A549 (cell line): ENCODE measurements at regions of chr18 and their contacts with region 1.

Region 1: DNA sequence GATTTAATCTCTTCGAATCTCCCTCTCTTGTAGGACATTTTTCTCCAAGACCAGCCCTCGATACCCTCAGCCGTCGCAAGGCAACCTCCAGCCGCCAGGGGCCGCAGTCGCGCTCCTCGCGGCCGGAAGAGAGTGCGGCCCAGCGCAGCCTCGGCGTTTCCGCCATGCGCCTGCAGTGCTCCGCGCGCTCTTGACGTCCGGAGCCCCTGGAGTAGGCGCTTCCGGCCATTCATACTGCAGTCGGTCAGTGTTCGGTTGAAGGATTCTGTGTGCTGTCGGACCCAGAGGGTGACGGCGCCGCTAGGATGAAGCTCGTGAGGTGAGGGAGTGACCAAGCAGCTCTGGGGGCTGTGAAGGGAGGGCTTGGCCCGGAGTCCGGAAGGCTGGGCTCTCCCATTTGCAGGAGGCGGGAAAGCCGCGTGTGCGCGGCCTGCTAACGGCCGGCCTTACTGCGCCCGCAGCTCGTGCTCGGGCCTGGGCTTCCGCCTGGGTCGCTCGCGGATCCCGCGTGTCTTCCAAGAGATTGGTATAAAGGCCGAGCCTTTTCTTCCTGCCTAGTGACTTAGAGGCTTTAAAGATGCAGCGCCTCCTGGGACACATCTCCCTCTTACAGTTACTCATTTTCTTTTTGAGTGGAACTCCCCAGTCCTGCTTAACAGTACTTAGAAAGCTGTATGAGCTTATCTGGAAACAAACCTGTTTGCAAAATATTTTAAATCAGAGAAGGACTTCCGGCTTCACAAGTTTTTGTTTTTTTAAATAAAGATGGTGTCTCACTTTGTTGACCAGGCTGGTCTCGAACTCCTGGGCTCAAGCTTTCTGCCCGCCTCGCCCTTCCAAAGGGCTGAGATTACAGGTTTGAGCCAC is at the start of gene SNRPD1:
- DNase-seq: peak; percentile 78 to 92
- ATAC-seq: peak; percentile 99 to 100
- H3K4me3 ChIP-seq: peak within 1 kb of the TSS; percentile 95
- H3K27ac ChIP-seq: peak within 1 kb of the TSS; percentile 93 to 94
- H3K4me1 ChIP-seq: peaks cover 18% of the 10 kb centered on the region; the same call in 2 of the 3 replicates
- CTCF ChIP-seq: peak; percentile 65
- EP300 ChIP-seq: no peak
- POLR2A ChIP-seq: peak; percentile 68
- RAD21 ChIP-seq: no peak; a peak in 1 of 5 replicates
- polyA plus RNA-seq, gene SNRPD1: 49.3 and 139 TPM in 2 replicates

Region 2: GRCh38 chr18:21074336-21075323 is 537.7 kb before region 1 on chr18:
- CTCF ChIA-PET with region 1: no interaction called
- POLR2A ChIA-PET with region 1: no interaction called
- DNase-seq: no peak
- ATAC-seq: no peak
- H3K4me3 ChIP-seq: no peak overlapping the region
- H3K27ac ChIP-seq: no peak overlapping the region
- H3K4me1 ChIP-seq: peaks cover 21% of the 10 kb centered on the region; the same call in 2 of the 3 replicates
- CTCF ChIP-seq: no peak
- EP300 ChIP-seq: no peak
- POLR2A ChIP-seq: no peak
- RAD21 ChIP-seq: no peak

Region 3: DNA sequence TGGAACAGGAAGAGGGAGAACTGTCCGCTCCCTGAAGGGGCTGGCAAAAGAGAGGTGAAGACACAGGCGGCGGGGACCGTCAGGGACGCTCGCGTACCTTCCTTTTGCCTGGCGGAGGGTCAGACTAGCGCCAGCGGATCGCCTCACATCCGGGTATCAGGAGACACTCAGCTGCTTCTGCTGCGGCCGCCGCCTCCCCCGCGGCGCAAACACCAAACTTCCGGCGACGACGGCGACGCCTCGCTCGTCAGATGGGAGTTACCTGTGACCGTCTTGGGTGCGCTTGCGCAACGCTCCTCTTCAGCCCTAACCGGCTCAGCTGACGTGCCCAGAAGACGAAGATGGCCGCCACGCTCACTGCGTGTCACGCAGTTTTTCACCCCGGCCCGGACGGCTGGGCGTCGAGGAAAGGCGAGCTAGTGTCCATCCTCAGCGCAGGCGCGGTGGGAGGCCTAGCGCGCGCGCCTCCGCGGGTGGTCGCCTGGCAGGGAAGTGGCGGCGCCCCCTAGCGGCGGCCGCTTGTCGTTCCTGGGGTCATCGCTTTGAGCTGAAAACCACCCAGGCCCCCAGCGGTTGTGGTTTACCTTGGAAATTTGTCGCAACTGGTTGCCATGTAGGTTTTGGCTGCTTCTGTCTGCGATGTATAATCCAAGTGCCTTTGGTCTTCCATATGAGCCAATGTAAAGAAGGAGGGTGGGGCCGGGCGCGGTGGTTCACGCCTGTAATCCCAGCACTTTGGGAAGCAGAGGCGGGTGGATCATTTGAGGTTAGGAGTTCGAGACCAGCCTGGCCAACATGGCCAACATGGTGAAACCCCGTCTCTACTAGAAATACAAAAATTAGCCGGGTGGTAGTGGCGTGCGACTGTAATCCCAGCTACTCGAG is 11.6 kb before region 1 on chr18 and contains the start of gene ESCO1:
- CTCF ChIA-PET with region 1: interaction called, 87 read pairs
- POLR2A ChIA-PET with region 1: interaction called, 16 read pairs
- DNase-seq: peak; percentile 81 to 99
- ATAC-seq: peak; percentile 93 to 94
- H3K4me3 ChIP-seq: peak within 1 kb of the TSS; percentile 77
- H3K27ac ChIP-seq: peak within 1 kb of the TSS; percentile 90 to 98
- H3K4me1 ChIP-seq: peaks cover 11% of the 10 kb centered on the region; the same call in 1 of the 3 replicates
- CTCF ChIP-seq: peak; percentile 88
- EP300 ChIP-seq: no peak
- POLR2A ChIP-seq: peak; percentile 86
- RAD21 ChIP-seq: peak; percentile 30 to 41; a peak in 3 of 5 replicates
- polyA plus RNA-seq, gene ESCO1: 9.1 and 13.2 TPM in 2 replicates